ENCODE measurements at regions of chr6 and their contacts with region 1.

Region 1: DNA sequence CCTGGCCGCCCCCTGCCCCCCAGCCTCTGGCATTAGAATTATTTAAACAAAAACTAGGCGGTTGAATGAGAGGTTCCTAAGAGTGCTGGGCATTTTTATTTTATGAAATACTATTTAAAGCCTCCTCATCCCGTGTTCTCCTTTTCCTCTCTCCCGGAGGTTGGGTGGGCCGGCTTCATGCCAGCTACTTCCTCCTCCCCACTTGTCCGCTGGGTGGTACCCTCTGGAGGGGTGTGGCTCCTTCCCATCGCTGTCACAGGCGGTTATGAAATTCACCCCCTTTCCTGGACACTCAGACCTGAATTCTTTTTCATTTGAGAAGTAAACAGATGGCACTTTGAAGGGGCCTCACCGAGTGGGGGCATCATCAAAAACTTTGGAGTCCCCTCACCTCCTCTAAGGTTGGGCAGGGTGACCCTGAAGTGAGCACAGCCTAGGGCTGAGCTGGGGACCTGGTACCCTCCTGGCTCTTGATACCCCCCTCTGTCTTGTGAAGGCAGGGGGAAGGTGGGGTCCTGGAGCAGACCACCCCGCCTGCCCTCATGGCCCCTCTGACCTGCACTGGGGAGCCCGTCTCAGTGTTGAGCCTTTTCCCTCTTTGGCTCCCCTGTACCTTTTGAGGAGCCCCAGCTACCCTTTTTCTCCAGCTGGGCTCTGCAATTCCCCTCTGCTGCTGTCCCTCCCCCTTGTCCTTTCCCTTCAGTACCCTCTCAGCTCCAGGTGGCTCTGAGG is 7.6 kb downstream of the CDKN1A start:
- DNase-seq: peak in 1 of 4 donors; percentile 45
- ATAC-seq: no peak
- H3K4me3 ChIP-seq: no peak overlapping the region
- H3K27ac ChIP-seq: peak overlapping the region in 1 of 4 donors; percentile 1
- H3K4me1 ChIP-seq: peaks cover 36% of the 10 kb centered on the region
- H3K27me3 ChIP-seq: no peaks in the 10 kb centered on the region
- CTCF ChIP-seq: no peak
- POLR2A ChIP-seq: no peak

Region 2: GRCh38 chr6:36615018-36615761 is 70.9 kb before region 1 on chr6:
- intact Hi-C with region 1: loop called (anchors 5 kb)
- DNase-seq: peak; percentile 45 to 54 (median 50)
- ATAC-seq: peak; percentile 41
- H3K4me3 ChIP-seq: no peak overlapping the region
- H3K27ac ChIP-seq: peak overlapping the region in 1 of 4 donors; percentile 46
- H3K4me1 ChIP-seq: peaks cover 29% of the 10 kb centered on the region
- H3K27me3 ChIP-seq: no peaks in the 10 kb centered on the region
- CTCF ChIP-seq: peak; percentile 47 to 94 (median 66)
- POLR2A ChIP-seq: no peak